Activated naive CD4-positive, alpha-beta T cell treated with anti-CD3 and anti-CD28 coated beads for 36 hours (primary cell): ENCODE measurements at regions of chr2 and their contacts with region 1.

Region 1: GRCh38 chr2:61854474-61855182 is 768 bp upstream of the FAM161A start:
- DNase-seq: peak; percentile 95
- H3K4me3 Mint-ChIP-seq: peak overlapping the region; percentile 93
- H3K27ac Mint-ChIP-seq: peak overlapping the region; percentile 91
- H3K4me1 Mint-ChIP-seq: peaks cover 17% of the 10 kb centered on the region
- H3K27me3 Mint-ChIP-seq: no peaks in the 10 kb centered on the region

Region 2: GRCh38 chr2:61016808-61017555 is 837.6 kb before region 1 on chr2:
- CTCF ChIA-PET with region 1: no interaction called
- intact Hi-C with region 1: loop called (anchors 5 kb)
- DNase-seq: peak; percentile 82
- H3K4me3 Mint-ChIP-seq: peak overlapping the region; percentile 98
- H3K27ac Mint-ChIP-seq: peak overlapping the region; percentile 95
- H3K4me1 Mint-ChIP-seq: peaks cover 43% of the 10 kb centered on the region
- H3K27me3 Mint-ChIP-seq: no peaks in the 10 kb centered on the region

Region 3: GRCh38 chr2:61426267-61426897 is 428.2 kb before region 1 on chr2:
- CTCF ChIA-PET with region 1: no interaction called
- intact Hi-C with region 1: loop called (anchors 1 kb)
- DNase-seq: peak; percentile 87
- H3K4me3 Mint-ChIP-seq: no peak overlapping the region
- H3K27ac Mint-ChIP-seq: peak overlapping the region; percentile 84
- H3K4me1 Mint-ChIP-seq: peaks cover 62% of the 10 kb centered on the region
- H3K27me3 Mint-ChIP-seq: no peaks in the 10 kb centered on the region

Region 4: GRCh38 chr2:61557381-61557780 is 297.2 kb before region 1 on chr2:
- CTCF ChIA-PET with region 1: no interaction called
- intact Hi-C with region 1: no loop called
- DNase-seq: no peak
- H3K4me3 Mint-ChIP-seq: no peak overlapping the region
- H3K27ac Mint-ChIP-seq: no peak overlapping the region
- H3K4me1 Mint-ChIP-seq: no peaks in the 10 kb centered on the region
- H3K27me3 Mint-ChIP-seq: no peaks in the 10 kb centered on the region

Region 5: DNA sequence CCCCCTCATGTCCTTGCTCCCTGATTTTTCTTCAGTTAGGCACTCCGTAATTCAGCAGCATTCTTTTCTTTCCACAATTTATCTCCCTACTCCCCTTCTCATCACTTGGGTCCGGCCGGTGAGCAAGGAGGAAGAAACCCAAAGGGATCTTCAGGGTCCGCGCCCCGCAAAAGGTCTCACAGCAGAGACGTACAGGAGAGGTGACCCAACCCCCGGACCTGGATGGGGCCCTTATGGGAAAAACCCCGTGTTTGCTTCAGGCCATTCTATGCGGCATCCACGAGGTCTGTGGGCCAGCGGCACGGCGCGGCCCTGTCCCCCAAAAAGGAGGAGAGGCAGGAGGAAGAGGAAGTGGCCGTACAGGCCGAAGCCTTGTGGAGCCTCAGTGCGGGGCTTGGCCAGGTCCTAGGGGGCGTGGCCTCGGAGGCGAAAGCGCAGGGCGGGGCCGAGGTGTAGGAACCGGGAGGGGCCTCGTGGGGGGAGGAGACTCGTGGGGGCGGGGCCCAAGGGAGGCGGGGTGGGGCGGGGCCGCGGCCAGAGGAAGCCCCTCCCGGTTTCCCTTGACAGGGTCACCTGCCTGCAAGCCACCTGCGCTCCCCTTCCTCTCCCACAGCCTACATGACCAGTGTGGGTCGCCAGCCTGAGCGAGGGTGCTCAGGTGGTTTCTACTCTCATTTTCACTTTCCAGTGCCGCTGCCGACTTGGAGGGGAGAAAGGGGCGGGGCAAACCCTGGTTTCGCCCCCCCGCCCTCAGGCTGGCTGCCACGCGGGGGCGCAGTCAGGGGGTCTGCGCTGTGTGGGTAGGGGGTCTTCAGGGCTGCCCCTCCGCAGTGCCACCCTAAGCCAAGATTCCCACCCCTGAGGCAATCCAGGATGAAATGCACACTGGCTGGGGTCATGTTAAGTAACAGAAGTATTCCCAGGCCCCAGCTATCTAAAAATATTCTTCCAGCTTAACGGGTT is 160.0 kb before region 1 on chr2:
- CTCF ChIA-PET with region 1: no interaction called
- intact Hi-C with region 1: loop called (anchors 1 kb)
- DNase-seq: peak; percentile 88
- H3K4me3 Mint-ChIP-seq: peak overlapping the region; percentile 86
- H3K27ac Mint-ChIP-seq: peak overlapping the region; percentile 59
- H3K4me1 Mint-ChIP-seq: peaks cover 11% of the 10 kb centered on the region
- H3K27me3 Mint-ChIP-seq: no peaks in the 10 kb centered on the region

Region 6: GRCh38 chr2:61905372-61906185 is 51.0 kb after region 1 on chr2 and contains the start of gene COMMD1:
- CTCF ChIA-PET with region 1: no interaction called
- intact Hi-C with region 1: loop called (anchors 1 kb)
- DNase-seq: peak; percentile 92
- H3K4me3 Mint-ChIP-seq: peak within 1 kb of the TSS; percentile 96
- H3K27ac Mint-ChIP-seq: peak within 1 kb of the TSS; percentile 63
- H3K4me1 Mint-ChIP-seq: peaks cover 25% of the 10 kb centered on the region
- H3K27me3 Mint-ChIP-seq: no peaks in the 10 kb centered on the region
- total RNA-seq, gene COMMD1: 26.9 to 29.5 TPM

Region 7: GRCh38 chr2:61943251-61943650 is 88.6 kb after region 1 on chr2:
- CTCF ChIA-PET with region 1: no interaction called
- intact Hi-C with region 1: no loop called
- DNase-seq: no peak
- H3K4me3 Mint-ChIP-seq: no peak overlapping the region
- H3K27ac Mint-ChIP-seq: no peak overlapping the region
- H3K4me1 Mint-ChIP-seq: peaks cover 7% of the 10 kb centered on the region
- H3K27me3 Mint-ChIP-seq: no peaks in the 10 kb centered on the region

Region 8: DNA sequence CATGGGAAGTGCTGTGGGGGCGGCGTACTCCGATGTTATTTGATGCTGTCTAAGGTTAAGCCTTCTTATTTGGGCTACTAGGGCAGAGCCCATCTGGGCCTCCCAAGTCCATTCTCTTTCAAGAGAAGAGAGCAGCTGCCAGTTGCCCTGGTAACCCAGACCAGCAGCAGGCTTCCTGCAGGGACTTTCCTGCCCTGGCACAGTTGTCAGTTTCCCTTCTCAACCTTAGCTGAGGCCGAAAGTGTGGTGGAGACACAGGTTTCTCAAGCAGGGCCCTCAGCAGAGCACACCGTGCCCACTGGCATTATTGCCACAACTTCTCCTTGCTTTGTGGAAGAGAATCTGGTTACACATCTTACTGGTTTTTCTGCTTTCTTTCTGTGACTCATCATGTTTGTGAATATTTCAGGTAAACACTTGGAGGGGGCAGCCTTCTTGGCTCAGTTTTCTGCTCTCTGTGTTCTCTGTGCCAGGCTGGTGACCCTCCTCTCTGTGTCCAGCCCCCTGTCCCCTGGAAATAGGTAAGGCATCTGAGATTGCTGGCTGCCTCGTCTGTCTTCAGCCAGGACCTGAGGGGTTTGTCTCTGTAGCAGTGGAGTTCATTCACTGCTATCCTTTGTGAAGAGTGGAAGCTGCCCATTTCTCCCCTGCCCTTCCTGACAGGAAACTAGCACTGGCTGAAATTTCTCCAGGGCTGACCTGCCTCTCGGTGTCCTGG is 452.3 kb after region 1 on chr2:
- CTCF ChIA-PET with region 1: no interaction called
- intact Hi-C with region 1: loop called (anchors 2 kb)
- DNase-seq: peak; percentile 73
- H3K4me3 Mint-ChIP-seq: no peak overlapping the region
- H3K27ac Mint-ChIP-seq: peak overlapping the region; percentile 90
- H3K4me1 Mint-ChIP-seq: peaks cover 74% of the 10 kb centered on the region
- H3K27me3 Mint-ChIP-seq: no peaks in the 10 kb centered on the region